Cardiac septum (tissue), 1 donor: ENCODE measurements at regions of chr7 and their contacts with region 1.

Region 1: GRCh38 chr7:24665564-24666294 is 91.5 kb downstream of the GSDME start:
- DNase-seq: no peak

Region 2: DNA sequence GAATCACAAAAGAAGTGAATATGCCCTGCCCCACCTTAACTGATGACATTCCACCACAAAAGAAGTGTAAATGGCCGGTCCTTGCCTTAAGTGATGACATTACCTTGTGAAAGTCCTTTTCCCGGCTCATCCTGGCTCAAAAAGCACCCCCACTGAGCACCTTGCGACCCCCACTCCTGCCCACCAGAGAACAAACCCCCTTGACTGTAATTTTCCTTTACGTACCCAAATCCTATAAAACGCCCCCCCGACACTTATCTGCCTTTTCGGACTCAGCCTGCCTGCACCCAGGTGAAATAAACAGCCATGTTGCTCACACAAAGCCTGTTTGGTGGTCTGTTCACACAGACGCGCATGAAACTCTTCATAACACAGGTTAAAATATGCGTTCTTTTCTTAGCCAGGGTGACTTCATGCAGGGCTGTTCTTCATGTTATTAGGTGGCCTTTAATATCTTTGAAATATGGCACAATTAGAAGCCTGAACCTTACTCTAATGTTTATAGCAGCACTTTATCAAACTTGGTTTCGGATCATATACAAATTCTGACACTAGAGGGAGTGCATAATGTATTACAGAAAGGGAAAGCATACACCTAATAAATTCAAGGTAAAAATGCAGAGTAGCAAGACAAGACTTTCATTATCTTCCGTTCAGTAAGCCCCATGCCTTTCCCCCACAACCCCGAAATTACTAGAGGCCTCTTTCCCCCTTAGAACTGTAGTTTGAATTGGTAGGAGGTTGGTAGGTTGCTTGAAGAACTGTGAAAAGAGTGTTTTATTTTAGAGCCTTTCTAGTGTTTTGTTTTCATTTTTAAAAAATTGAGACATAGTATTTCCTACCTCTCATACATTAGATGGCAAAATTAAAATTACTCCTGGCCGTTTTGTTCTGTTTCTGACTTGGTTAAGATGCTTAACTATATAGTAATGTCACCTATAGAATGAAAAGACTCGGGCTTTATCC is 263.8 kb before region 1 on chr7:
- intact Hi-C with region 1: loop called (anchors 5 kb)
- DNase-seq: no peak